Tibial artery (tissue), 4 donors: ENCODE measurements at regions of chr2 and their contacts with region 1.

Region 1: DNA sequence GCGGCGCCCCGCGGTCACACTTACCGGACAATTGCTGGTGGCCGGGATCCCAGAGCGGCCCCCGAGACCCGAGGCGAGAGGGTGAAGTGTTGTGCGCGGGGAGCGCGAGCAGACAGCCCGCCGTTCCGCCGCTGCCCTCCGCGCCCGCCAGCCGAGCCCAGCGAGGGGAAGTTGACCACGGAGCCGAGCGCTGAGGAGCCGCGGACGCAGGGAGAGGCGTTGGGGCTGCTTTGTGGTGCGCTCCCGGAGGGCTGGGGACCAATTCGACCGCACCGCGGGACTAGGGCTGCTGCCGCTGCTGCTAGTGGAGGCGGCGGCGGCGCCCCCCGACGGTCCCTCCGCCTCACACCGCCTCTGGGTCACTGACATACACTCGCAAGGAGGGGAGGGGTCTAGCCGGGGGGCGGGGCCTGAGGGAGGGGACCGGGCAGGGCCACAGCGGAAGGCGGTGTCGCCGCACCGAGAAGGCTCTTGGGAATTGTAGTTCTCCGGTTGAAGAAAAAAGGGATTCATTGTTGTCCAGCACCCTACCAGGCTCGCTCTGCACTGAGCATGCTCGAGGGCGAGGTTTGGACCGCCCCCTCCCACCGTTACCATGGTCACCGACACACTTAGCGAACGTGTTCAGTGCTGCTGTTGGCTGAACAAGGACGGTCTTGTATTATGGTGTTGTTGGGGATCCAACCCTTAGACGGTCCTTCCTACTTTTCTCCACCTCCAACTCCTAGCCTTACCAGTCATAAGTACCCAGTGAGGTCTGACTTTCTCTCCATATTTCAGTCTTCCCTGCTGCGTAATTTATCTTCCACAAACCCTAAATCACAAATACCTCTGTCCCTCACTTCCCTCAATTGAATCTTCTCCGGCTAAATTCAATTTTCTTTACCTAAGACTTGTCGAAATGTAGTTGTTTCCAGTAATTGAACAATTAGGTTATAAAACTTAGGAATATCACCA is at the start of gene PELI1:
- DNase-seq: peak; percentile 96 to 98
- H3K4me3 ChIP-seq: peak within 1 kb of the TSS; percentile 81 to 83
- H3K27ac ChIP-seq: peak within 1 kb of the TSS; percentile 94 to 97
- H3K4me1 ChIP-seq: peaks cover 0 to 27% (median 7%) of the 10 kb centered on the region in 4 donors
- H3K27me3 ChIP-seq: no peaks in the 10 kb centered on the region
- CTCF ChIP-seq: peak; percentile 17 to 20

Region 2: GRCh38 chr2:64018923-64019718 is 125.2 kb before region 1 on chr2 and contains the start of gene VPS54:
- intact Hi-C with region 1: loop called (anchors 5 kb)
- DNase-seq: peak; percentile 58 to 84
- H3K4me3 ChIP-seq: peak within 1 kb of the TSS; percentile 71 to 87
- H3K27ac ChIP-seq: peak within 1 kb of the TSS; percentile 95 to 99
- H3K4me1 ChIP-seq: peaks cover 0 to 38% (median 16%) of the 10 kb centered on the region in 4 donors
- H3K27me3 ChIP-seq: no peaks in the 10 kb centered on the region
- CTCF ChIP-seq: no peak

Region 3: GRCh38 chr2:64203858-64204632 is 59.7 kb after region 1 on chr2:
- intact Hi-C with region 1: loop called (anchors 10 kb)
- DNase-seq: peak in 1 of 2 donors; percentile 30
- H3K4me3 ChIP-seq: peak overlapping the region; percentile 26 to 38
- H3K27ac ChIP-seq: peak overlapping the region; percentile 88
- H3K4me1 ChIP-seq: peaks cover 0 to 48% (median 31%) of the 10 kb centered on the region in 4 donors
- H3K27me3 ChIP-seq: no peaks in the 10 kb centered on the region
- CTCF ChIP-seq: no peak

Region 4: GRCh38 chr2:64311948-64312621 is 167.8 kb after region 1 on chr2:
- intact Hi-C with region 1: loop called (anchors 10 kb)
- DNase-seq: peak; percentile 82 to 90
- H3K4me3 ChIP-seq: peak overlapping the region; percentile 23 to 29
- H3K27ac ChIP-seq: peak overlapping the region; percentile 70 to 74
- H3K4me1 ChIP-seq: peaks cover 0 to 24% (median 20%) of the 10 kb centered on the region in 4 donors
- H3K27me3 ChIP-seq: no peaks in the 10 kb centered on the region
- CTCF ChIP-seq: peak; percentile 41 to 54

Region 5: DNA sequence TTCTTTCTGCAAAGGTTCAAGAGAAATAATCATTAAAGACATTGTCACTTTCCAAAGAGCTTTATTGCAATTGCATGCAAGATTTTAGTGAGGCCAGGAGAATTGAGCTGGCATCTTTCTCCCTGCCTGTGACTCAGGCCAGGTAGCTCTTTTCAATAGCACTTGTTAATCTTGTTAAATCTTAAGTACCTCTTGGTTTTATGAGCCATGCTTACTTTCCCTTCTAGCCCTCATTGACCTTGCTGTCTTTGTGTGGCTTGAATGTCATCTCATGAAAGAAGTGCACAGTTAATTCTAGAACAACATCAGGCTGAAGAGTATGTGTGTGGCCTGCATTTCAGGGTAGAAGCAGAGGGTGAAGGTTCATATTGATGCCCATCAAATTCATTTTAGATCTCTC is 294.9 kb after region 1 on chr2:
- intact Hi-C with region 1: no loop called
- DNase-seq: no peak
- H3K4me3 ChIP-seq: no peak overlapping the region
- H3K27ac ChIP-seq: no peak overlapping the region
- H3K4me1 ChIP-seq: no peaks in the 10 kb centered on the region
- H3K27me3 ChIP-seq: no peaks in the 10 kb centered on the region
- CTCF ChIP-seq: no peak